ENCODE measurements at regions of chr20 and their contacts with region 1.

Region 1: GRCh38 chr20:49484180-49485140 is 2.0 kb upstream of the KCNB1 start:
- DNase-seq: peak; percentile 60 to 82
- H3K4me3 ChIP-seq: peak overlapping the region; percentile 47 to 60 (median 48)
- H3K27ac ChIP-seq: no peak overlapping the region
- H3K4me1 ChIP-seq: peaks cover 0 to 3% of the 10 kb centered on the region in 2 donors
- H3K27me3 ChIP-seq: peaks cover 6 to 25% of the 10 kb centered on the region in 2 donors
- CTCF ChIP-seq: peak; percentile 27 to 89 (median 81)
- POLR2A ChIP-seq: no peak

Region 2: GRCh38 chr20:49338061-49338460 is 146.4 kb before region 1 on chr20:
- intact Hi-C with region 1: loop called (anchors 10 kb)
- DNase-seq: no peak
- H3K4me3 ChIP-seq: no peak overlapping the region
- H3K27ac ChIP-seq: no peak overlapping the region
- H3K4me1 ChIP-seq: no peaks in the 10 kb centered on the region
- H3K27me3 ChIP-seq: peaks cover 0 to 6% of the 10 kb centered on the region in 2 donors
- CTCF ChIP-seq: no peak
- POLR2A ChIP-seq: no peak

Region 3: GRCh38 chr20:49372095-49372726 is 112.2 kb before region 1 on chr20:
- intact Hi-C with region 1: loop called (anchors 10 kb)
- DNase-seq: peak; percentile 56 to 63
- H3K4me3 ChIP-seq: no peak overlapping the region
- H3K27ac ChIP-seq: peak overlapping the region in 1 of 2 donors; percentile 48
- H3K4me1 ChIP-seq: no peaks in the 10 kb centered on the region
- H3K27me3 ChIP-seq: no peaks in the 10 kb centered on the region
- CTCF ChIP-seq: no peak
- POLR2A ChIP-seq: no peak

Region 4: GRCh38 chr20:49541733-49542513 is 57.5 kb after region 1 on chr20:
- intact Hi-C with region 1: loop called (anchors 2 kb)
- DNase-seq: peak; percentile 45 to 72
- H3K4me3 ChIP-seq: no peak overlapping the region
- H3K27ac ChIP-seq: no peak overlapping the region
- H3K4me1 ChIP-seq: no peaks in the 10 kb centered on the region
- H3K27me3 ChIP-seq: no peaks in the 10 kb centered on the region
- CTCF ChIP-seq: peak; percentile 89 to 97 (median 94)
- POLR2A ChIP-seq: no peak

Region 5: GRCh38 chr20:49603209-49603627 is 118.8 kb after region 1 on chr20:
- intact Hi-C with region 1: no loop called
- DNase-seq: no peak
- H3K4me3 ChIP-seq: no peak overlapping the region
- H3K27ac ChIP-seq: peak overlapping the region in 1 of 2 donors; percentile 55
- H3K4me1 ChIP-seq: no peaks in the 10 kb centered on the region
- H3K27me3 ChIP-seq: no peaks in the 10 kb centered on the region
- CTCF ChIP-seq: no peak
- POLR2A ChIP-seq: no peak